Psoas muscle (tissue), 8 donors: ENCODE measurements at regions of chr9 and their contacts with region 1.

Region 1: DNA sequence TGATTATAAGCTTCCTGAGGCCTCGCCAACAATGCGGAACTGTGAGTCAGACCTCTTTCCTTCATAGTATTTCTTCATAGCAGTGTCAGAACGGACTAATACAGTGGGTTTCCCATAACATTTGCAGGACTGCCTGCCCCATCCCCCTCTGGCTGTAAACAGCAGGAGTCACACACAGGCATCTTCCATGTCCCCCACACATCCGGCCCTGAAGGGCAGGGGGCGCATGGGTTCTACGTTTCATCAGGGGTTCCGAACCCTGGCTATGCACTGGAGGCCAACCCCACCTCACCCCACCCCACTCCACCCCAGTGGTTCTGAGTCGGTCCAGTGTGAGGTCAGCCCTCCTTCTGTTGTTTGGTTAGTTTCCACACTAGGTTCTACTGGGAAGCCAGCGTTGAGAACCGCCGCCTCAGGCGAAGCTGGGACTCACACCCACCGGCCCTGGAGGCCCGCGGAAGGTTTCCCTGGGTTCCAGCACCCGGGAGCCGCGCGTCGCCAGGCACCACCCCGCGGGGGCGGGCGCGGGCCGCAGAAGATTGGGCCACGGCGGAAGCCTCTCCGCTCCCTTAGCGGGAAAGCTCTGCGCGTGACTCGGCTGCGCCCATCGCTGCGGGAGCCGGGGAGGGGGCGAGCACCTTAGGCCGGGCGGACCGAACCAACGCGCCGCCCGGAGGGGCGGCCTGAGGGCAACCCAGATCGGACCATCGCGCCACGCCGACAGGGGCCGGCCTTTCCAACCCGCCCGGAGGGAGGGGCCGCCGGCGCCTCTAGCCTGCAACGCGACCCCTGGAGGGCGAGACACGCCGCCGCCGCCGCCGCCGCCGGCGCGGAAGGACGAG is at the start of gene RUSC2:
- DNase-seq: peak; percentile 92 to 95
- ATAC-seq: peak; percentile 78 to 87 (median 82)
- H3K4me3 ChIP-seq: peak within 1 kb of the TSS; percentile 89
- H3K27ac ChIP-seq: peak within 1 kb of the TSS; percentile 99
- H3K4me1 ChIP-seq: peaks cover 18% of the 10 kb centered on the region
- H3K27me3 ChIP-seq: no peaks in the 10 kb centered on the region
- CTCF ChIP-seq: peak; percentile 30
- total RNA-seq, gene RUSC2: 34.4 to 101 (median 72.1) TPM

Region 2: GRCh38 chr9:35518226-35518821 is 28.8 kb after region 1 on chr9:
- intact Hi-C with region 1: loop called in 1 of 2 experiments (anchors 2 kb)
- DNase-seq: peak; percentile 37 to 57
- ATAC-seq: peak; percentile 51 to 77 (median 70)
- H3K4me3 ChIP-seq: peak overlapping the region; percentile 9
- H3K27ac ChIP-seq: peak overlapping the region; percentile 92
- H3K4me1 ChIP-seq: peaks cover 95% of the 10 kb centered on the region
- H3K27me3 ChIP-seq: no peaks in the 10 kb centered on the region
- CTCF ChIP-seq: no peak

Region 3: DNA sequence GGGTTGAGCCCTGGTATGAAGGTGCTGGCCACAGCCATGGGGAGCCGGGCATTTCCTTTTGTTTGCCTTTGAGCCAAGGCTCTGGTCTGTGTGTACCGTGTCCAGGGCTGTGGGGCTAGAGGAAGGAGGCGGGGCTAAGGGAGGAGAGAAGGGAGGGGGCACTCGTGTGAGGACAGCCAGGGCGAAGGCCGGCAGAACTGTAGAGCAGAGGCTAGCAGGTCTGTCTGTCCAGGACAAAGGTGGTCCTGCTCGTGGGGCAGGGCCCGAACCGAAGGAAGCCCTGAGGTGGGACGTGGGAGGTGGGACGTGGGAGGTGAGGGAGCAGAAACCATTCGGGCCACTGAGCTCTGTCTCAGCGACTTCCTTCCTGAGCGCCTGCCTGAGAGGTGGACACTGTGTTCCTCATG is 74.3 kb after region 1 on chr9:
- intact Hi-C with region 1: loop called in 1 of 2 experiments (anchors 2 kb)
- DNase-seq: peak; percentile 71 to 85
- ATAC-seq: peak; percentile 52 to 64 (median 58)
- H3K4me3 ChIP-seq: peak overlapping the region; percentile 58
- H3K27ac ChIP-seq: peak overlapping the region; percentile 90
- H3K4me1 ChIP-seq: peaks cover 82% of the 10 kb centered on the region
- H3K27me3 ChIP-seq: no peaks in the 10 kb centered on the region
- CTCF ChIP-seq: no peak

Region 4: GRCh38 chr9:35646533-35647265 is 157.2 kb after region 1 on chr9:
- intact Hi-C with region 1: loop called in 1 of 2 experiments (anchors 10 kb)
- DNase-seq: peak; percentile 93 to 96
- ATAC-seq: peak; percentile 96 to 100 (median 97)
- H3K4me3 ChIP-seq: peak overlapping the region; percentile 85
- H3K27ac ChIP-seq: peak overlapping the region; percentile 92
- H3K4me1 ChIP-seq: no peaks in the 10 kb centered on the region
- H3K27me3 ChIP-seq: no peaks in the 10 kb centered on the region
- CTCF ChIP-seq: peak; percentile 95

Region 5: GRCh38 chr9:35696525-35697215 is 207.1 kb after region 1 on chr9:
- intact Hi-C with region 1: loop called in 1 of 2 experiments (anchors 10 kb)
- DNase-seq: peak; percentile 46 to 74
- ATAC-seq: peak; percentile 71 to 85 (median 76)
- H3K4me3 ChIP-seq: no peak overlapping the region
- H3K27ac ChIP-seq: peak overlapping the region; percentile 46
- H3K4me1 ChIP-seq: peaks cover 13% of the 10 kb centered on the region
- H3K27me3 ChIP-seq: no peaks in the 10 kb centered on the region
- CTCF ChIP-seq: peak; percentile 82